SK-N-SH (cell line): ENCODE measurements at regions of chr12 and their contacts with region 1.

Region 1: GRCh38 chr12:118979763-118980406 is 1.5 kb upstream of the SRRM4 start:
- DNase-seq: peak; percentile 73
- H3K4me3 ChIP-seq: peak overlapping the region; percentile 54 to 55; a peak in 2 of 4 replicates
- H3K27ac ChIP-seq: peak overlapping the region in 1 of 2 experiments; percentile 89; a peak in 2 of 4 replicates
- H3K4me1 ChIP-seq: peaks cover 0 to 8% of the 10 kb centered on the region in 2 experiments; a peak in 1 of 4 replicates
- H3K27me3 ChIP-seq: no peaks in the 10 kb centered on the region
- CTCF ChIP-seq: peak; percentile 64
- EP300 ChIP-seq: no peak
- RAD21 ChIP-seq: peak; percentile 87

Region 2: DNA sequence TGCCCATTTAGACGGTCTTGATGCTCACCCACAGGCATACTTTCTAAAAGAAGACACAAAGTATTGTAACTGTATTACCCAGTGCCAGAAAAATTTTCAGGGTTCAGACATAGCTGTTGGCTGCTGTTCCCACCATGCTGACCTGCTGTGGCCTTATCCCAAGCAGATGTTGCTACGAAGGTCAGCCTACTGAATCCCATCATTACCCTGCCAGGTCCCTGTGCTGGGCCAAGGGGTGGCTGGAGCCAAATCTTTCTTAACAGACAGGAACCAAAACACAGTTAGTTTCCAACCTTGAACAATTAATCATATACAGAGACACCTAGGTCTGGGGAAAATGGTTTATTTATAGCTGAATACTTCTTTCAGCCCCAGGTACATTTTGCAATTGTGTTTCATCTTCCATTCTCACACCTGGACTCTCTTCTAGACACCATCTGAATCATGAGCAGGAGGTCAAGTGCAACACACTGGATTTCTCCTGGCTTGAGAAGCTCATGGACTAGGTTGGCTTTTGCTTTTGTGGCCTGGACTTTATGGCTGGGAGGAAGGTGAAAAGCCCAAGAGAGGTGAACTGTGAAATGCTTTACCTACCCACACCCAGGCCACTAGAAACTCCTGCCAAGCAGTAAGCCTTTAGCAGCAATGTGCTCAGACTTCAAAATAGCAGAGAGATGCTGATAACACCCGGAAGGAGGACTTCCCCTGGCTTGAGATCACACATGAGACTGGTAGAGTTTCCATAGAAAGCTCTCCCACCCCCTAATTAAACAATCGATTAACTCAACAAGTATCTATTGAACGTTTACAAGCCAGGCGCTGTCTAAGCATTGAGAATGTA is 453.4 kb before region 1 on chr12:
- CTCF ChIA-PET with region 1: no interaction called
- POLR2A ChIA-PET with region 1: no interaction called
- DNase-seq: no peak
- H3K4me3 ChIP-seq: no peak overlapping the region
- H3K27ac ChIP-seq: no peak overlapping the region
- H3K4me1 ChIP-seq: no peaks in the 10 kb centered on the region
- H3K27me3 ChIP-seq: no peaks in the 10 kb centered on the region
- CTCF ChIP-seq: no peak
- EP300 ChIP-seq: no peak
- RAD21 ChIP-seq: no peak

Region 3: DNA sequence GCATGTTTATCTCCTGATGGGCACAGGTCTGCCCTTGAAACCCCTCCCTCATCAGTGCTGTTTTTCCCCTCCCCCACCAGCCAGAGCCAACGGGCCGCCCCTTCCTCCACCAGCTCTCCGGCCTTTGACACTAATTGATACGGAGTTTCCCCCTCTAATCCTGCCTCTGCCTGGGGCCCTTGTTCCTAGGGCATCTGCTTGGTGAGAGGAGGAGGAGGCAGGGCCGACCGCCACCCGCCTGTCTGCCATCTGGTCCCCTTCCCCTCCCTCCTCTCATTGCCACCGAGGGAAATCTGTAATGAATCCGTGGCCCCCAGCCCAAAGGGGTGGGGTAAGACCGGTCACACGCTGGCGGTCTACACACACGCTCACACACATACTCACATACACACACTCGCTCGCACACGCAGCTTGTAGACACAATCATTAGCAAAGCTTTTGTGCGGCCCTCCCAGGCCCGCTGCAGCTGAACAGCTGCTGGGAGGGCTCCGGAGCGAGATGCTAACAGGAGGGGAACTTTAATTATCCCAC is 28.9 kb after region 1 on chr12:
- CTCF ChIA-PET with region 1: interaction called, 11 read pairs
- POLR2A ChIA-PET with region 1: interaction called, 11 read pairs
- DNase-seq: peak; percentile 74
- H3K4me3 ChIP-seq: peak overlapping the region in 1 of 2 experiments; percentile 24; a peak in 1 of 4 replicates
- H3K27ac ChIP-seq: peak overlapping the region in 1 of 2 experiments; percentile 92; a peak in 2 of 4 replicates
- H3K4me1 ChIP-seq: peaks cover 0 to 53% of the 10 kb centered on the region in 2 experiments; a peak in 2 of 4 replicates
- H3K27me3 ChIP-seq: no peaks in the 10 kb centered on the region
- CTCF ChIP-seq: no peak
- EP300 ChIP-seq: peak in 1 of 2 experiments; percentile 68; a peak in 1 of 4 replicates
- RAD21 ChIP-seq: no peak